Naive thymus-derived CD4-positive, alpha-beta T cell (primary cell): ENCODE measurements at regions of chr19 and their contacts with region 1.

Region 1: DNA sequence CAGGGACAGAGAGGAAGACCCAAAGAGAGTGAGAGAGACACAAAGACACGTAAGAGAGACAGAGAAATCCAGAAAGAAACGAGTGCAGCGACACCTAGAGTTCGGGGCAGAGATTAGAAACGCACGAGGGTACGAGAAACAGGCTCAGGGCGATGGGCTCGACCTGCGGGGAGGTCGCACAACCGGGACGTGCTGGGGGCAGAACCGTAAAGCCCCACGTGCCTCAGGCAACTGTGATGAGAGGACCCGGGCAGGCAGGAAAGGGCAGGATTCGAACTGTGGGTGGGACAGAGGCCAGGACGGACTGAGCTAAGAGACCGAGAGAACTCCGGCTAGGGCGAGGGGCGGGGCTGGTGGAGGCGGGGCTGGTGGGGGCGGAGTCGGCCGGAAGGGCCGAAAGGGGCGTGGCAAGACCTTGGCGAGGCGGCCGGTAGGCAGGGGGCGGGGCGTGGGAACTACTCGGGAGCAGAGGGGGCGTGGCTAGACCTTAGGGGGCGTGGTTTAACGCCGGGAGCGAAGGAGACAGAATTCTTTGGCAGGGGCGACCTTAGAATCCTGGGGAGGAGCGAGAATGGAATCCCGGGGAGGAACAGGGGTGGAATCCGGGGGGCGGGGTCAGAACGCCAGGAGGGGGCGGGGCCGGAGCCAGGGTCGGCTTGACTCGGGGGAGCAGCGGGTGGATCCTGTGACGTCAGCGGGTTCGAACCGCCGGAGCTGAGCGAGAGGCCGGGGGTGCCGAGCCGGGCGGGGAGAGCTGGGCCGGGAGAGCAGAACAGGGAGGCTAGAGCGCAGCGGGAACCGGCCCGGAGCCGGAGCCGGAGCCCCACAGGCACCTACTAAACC is at the start of gene NECTIN2:
- DNase-seq: peak; percentile 47 to 95 (median 69)
- ATAC-seq: peak; percentile 85
- H3K4me3 ChIP-seq: peak within 1 kb of the TSS; percentile 57
- H3K4me3 Mint-ChIP-seq: peak within 1 kb of the TSS; percentile 82 to 98 (median 89)
- H3K27ac ChIP-seq: peak within 1 kb of the TSS; percentile 58
- H3K27ac Mint-ChIP-seq: peak within 1 kb of the TSS in 8 of 9 donors; percentile 61 to 92 (median 79)
- H3K4me1 ChIP-seq: peaks cover 18 to 19% of the 10 kb centered on the region in 2 donors
- H3K4me1 Mint-ChIP-seq: peaks cover 18 to 38% (median 29%) of the 10 kb centered on the region in 7 donors
- H3K27me3 ChIP-seq: peaks cover 0 to 5% of the 10 kb centered on the region in 2 donors
- H3K27me3 Mint-ChIP-seq: peaks cover 0 to 46% (median 9%) of the 10 kb centered on the region in 5 donors
- total RNA-seq, gene NECTIN2: 0.17 to 9.2 (median 1.2) TPM

Region 2: GRCh38 chr19:44723952-44724319 is 121.9 kb before region 1 on chr19:
- CTCF ChIA-PET with region 1: interaction called, 3 read pairs
- POLR2A ChIA-PET with region 1: no interaction called
- intact Hi-C with region 1: loop called (anchors 1 kb)
- DNase-seq: peak; percentile 64 to 84 (median 76)
- ATAC-seq: peak; percentile 93
- H3K4me3 ChIP-seq: no peak overlapping the region
- H3K4me3 Mint-ChIP-seq: peak overlapping the region in 1 of 10 donors; percentile 60
- H3K27ac ChIP-seq: no peak overlapping the region
- H3K27ac Mint-ChIP-seq: peak overlapping the region in 5 of 9 donors; percentile 26 to 79 (median 61)
- H3K4me1 ChIP-seq: peaks cover 0 to 10% of the 10 kb centered on the region in 2 donors
- H3K4me1 Mint-ChIP-seq: peaks cover 8 to 62% (median 24%) of the 10 kb centered on the region in 7 donors
- H3K27me3 ChIP-seq: no peaks in the 10 kb centered on the region
- H3K27me3 Mint-ChIP-seq: peaks cover 0 to 4% (median 0%) of the 10 kb centered on the region in 5 donors

Region 3: DNA sequence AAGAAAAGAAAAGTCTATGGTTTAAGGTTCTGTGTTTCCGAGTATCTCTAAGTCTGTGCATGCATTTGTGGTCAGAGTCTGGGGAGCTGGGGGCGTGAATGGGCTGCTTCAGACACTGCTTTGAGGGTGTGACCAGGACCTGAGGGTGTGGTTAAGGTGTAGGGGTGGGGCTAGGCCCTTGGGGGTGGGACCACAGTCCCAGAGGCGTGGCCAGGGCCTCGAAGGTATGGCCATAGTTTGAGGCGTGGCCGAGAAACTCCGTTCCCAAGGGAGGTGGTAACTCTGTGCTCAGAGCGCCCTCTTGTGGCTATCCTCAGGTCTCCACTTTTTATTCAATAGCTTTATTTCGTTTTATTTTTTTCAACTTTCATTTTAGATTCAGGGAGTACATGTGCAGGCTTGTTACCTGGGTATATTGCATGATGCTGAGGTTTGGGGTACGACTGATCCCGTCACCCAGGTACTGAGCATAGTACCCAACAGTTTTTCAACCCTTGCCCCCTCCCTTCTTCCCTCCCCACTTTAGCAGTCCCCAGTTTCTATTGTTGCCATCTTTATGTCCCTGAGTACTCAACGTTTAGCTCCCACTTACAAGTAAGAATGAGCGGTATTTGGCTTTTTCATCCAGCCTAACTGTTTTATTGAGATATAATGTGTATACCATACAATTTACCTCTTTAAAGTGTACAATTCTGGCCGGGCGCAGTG is 75.1 kb before region 1 on chr19:
- CTCF ChIA-PET with region 1: interaction called, 4 read pairs
- POLR2A ChIA-PET with region 1: no interaction called
- intact Hi-C with region 1: loop called (anchors 1 kb)
- DNase-seq: peak; percentile 88 to 96 (median 94)
- ATAC-seq: peak; percentile 100
- H3K4me3 ChIP-seq: no peak overlapping the region
- H3K4me3 Mint-ChIP-seq: peak overlapping the region; percentile 45 to 83 (median 72)
- H3K27ac ChIP-seq: no peak overlapping the region
- H3K27ac Mint-ChIP-seq: peak overlapping the region; percentile 69 to 95 (median 86)
- H3K4me1 ChIP-seq: peaks cover 5 to 9% of the 10 kb centered on the region in 2 donors
- H3K4me1 Mint-ChIP-seq: peaks cover 0 to 37% (median 24%) of the 10 kb centered on the region in 7 donors
- H3K27me3 ChIP-seq: no peaks in the 10 kb centered on the region
- H3K27me3 Mint-ChIP-seq: peaks cover 0 to 3% (median 0%) of the 10 kb centered on the region in 5 donors

Region 4: DNA sequence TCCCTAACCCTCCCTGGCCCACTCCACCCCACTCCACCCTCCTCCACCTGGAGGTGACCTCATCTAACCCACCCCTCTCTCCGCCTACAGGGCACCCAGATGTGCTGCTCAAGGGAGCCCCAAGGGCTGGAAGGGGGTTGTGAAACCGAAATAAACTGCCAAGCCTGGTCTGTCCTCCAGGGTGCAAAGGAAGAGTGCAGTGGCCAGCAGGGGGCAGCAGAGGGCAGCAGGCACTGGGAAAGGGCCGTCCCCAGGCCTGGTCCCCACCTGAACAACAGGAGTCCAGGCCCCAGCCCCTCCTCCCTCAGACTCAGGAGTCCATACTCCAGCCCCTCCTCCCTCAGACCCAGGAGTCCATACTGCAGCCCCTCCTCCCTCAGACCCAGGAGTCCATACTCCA is 45.4 kb before region 1 on chr19:
- CTCF ChIA-PET with region 1: no interaction called
- POLR2A ChIA-PET with region 1: no interaction called
- intact Hi-C with region 1: loop called in 1 of 2 experiments (anchors 1 kb)
- DNase-seq: peak; percentile 58 to 89 (median 75)
- ATAC-seq: peak; percentile 99
- H3K4me3 ChIP-seq: no peak overlapping the region
- H3K4me3 Mint-ChIP-seq: no peak overlapping the region
- H3K27ac ChIP-seq: no peak overlapping the region
- H3K27ac Mint-ChIP-seq: no peak overlapping the region
- H3K4me1 ChIP-seq: peaks cover 0 to 8% of the 10 kb centered on the region in 2 donors
- H3K4me1 Mint-ChIP-seq: peaks cover 0 to 27% (median 13%) of the 10 kb centered on the region in 7 donors
- H3K27me3 ChIP-seq: no peaks in the 10 kb centered on the region
- H3K27me3 Mint-ChIP-seq: no peaks in the 10 kb centered on the region